GM10248 (cell line): ENCODE measurements at regions of chr7 and their contacts with region 1.

Region 1: DNA sequence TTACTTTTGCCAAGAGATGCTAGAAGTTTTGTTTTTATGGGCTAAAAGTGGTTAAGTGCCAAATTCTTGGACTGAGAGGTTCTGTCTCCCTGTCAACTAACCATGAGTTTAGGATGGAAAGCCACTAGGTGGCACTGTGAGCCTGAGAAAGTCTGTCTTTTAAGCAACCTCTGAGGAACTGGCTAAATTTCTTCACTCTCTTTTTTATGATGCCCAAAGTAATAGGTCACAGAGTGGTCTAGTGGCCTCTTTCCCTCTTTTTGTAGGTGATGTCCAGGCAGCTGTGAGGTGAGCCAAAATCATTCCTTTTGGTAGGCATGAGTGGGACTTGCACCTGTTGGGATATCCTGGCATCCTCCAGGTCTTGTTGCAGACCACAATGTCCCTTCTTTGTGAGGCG is 56.8 kb downstream of the SND1 start:
- DNase-seq: peak; percentile 32
- CTCF ChIP-seq: peak; percentile 61

Region 2: GRCh38 chr7:127556404-127556803 is 152.4 kb before region 1 on chr7:
- CTCF ChIA-PET with region 1: no interaction called
- POLR2A ChIA-PET with region 1: no interaction called
- DNase-seq: no peak
- CTCF ChIP-seq: no peak

Region 3: GRCh38 chr7:127629268-127629854 is 79.4 kb before region 1 on chr7:
- CTCF ChIA-PET with region 1: no interaction called
- POLR2A ChIA-PET with region 1: no interaction called
- DNase-seq: peak; percentile 45
- CTCF ChIP-seq: peak; percentile 45

Region 4: DNA sequence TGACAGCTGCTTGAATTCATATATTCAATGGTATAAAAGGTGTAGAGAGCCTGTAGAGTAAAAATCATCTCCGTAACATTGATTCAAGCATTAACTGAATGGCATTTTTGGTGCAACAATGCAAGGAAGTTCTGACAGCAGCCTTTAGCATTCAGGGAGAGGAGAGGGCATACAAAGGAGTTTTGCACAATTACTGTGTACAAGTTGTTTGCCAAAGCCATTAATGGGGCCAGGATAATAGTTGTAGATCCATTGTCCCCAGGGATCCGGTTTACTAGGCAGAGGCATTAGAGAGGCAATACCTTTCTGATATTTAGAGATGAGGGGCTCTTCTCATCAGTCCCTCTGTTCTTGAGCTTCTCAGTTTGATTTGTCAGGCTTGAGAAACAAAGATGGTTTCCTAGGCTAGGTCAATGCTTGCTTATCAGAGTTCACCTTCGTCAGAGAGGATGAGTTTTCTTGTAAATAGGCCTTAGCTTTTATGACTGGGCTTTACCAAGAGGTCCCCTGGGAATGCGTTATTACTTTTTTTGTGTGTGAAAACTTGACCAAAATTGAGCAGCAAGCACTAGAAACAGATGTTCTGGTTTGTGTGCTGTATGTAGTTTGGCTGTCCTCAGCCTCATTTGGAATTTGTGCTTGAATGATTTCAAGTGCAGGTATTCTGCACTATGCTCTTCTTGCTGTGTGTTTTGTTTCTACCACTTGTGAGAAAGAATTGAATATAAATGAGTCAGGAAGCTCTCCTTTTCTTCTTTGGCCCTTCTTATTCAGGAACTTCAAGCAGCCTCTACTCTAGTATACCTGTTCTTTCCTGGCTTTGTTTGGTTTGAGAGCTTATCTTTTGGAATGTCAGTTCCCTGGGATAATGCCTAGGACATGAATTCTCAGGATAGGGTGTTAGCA is 24.8 kb before region 1 on chr7:
- CTCF ChIA-PET with region 1: interaction called, 11 read pairs
- POLR2A ChIA-PET with region 1: no interaction called
- DNase-seq: peak; percentile 21
- CTCF ChIP-seq: no peak

Region 5: DNA sequence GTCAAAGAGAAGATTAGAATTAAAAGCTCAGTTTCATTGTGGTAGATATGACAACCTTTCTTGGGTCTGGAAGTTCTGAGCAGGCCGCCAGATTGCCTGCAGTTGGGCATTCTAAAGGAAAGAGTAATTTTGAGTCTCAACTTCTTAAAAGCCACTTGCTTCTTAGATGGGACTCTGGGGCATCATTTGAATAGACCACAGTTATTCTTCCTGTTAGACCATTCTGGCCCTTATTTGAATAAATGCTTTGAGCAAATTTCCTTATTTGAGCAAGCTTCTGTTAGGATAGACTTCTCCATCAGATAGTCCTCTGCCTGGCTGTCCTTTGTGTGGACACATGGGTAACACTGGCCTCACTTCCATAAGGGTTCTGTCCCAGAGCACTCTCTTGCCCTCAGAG is 16.6 kb before region 1 on chr7:
- CTCF ChIA-PET with region 1: interaction called, 16 read pairs
- POLR2A ChIA-PET with region 1: no interaction called
- DNase-seq: peak; percentile 22
- CTCF ChIP-seq: no peak

Region 6: GRCh38 chr7:127726476-127726875 is 17.7 kb after region 1 on chr7:
- CTCF ChIA-PET with region 1: interaction called, 45 read pairs
- POLR2A ChIA-PET with region 1: no interaction called
- DNase-seq: no peak
- CTCF ChIP-seq: no peak

Region 7: GRCh38 chr7:127758105-127758504 is 49.3 kb after region 1 on chr7:
- CTCF ChIA-PET with region 1: no interaction called
- POLR2A ChIA-PET with region 1: no interaction called
- DNase-seq: no peak
- CTCF ChIP-seq: no peak